Right cardiac atrium (tissue), 5 donors: ENCODE measurements at regions of chr1 and their contacts with region 1.

Region 1: DNA sequence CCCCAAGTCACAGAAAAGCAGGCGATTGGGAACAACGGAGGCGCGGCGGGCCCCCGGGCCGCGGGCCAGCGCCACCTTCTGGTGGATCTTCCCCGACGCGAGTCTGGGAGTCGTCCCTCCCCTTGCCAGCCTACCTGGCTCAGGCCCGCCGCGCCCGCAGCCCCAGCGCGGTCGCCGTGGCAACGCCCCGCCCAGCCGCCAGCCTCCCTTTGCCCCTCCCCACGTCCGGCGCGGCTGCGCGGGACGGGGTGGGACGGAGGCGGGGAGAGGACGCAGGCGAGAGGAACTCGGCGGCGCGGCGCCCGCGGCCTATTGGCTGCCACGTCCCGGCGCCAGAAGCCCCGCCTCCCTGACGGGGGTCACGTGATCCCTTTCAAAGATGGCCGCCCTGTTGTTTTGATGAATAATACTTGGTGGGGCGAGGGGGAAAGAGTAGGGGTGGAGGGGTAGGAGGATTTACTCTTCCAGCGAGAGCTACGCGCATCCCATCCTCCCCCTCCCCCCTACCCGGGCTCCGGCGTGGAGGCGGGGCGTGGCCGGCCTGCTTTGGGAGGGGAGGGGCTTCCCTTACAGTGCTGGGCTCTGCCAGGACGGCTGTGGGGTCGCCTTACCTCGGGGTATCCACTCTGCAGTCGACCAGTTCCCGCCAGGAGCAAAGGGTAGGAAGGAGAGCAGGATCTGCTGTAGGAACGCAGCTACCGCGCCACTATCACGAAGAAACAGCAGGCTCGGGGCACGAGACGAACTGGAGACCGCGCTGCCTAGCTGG is at the start of gene UBE4B:
- DNase-seq: peak; percentile 98 to 100 (median 99)
- ATAC-seq: peak; percentile 100
- H3K4me3 ChIP-seq: peak within 1 kb of the TSS; percentile 80
- H3K27ac ChIP-seq: peak within 1 kb of the TSS; percentile 83
- H3K4me1 ChIP-seq: no peaks in the 10 kb centered on the region
- H3K27me3 ChIP-seq: no peaks in the 10 kb centered on the region
- total RNA-seq, gene UBE4B: 53.8 to 90.5 (median 65.3) TPM

Region 2: DNA sequence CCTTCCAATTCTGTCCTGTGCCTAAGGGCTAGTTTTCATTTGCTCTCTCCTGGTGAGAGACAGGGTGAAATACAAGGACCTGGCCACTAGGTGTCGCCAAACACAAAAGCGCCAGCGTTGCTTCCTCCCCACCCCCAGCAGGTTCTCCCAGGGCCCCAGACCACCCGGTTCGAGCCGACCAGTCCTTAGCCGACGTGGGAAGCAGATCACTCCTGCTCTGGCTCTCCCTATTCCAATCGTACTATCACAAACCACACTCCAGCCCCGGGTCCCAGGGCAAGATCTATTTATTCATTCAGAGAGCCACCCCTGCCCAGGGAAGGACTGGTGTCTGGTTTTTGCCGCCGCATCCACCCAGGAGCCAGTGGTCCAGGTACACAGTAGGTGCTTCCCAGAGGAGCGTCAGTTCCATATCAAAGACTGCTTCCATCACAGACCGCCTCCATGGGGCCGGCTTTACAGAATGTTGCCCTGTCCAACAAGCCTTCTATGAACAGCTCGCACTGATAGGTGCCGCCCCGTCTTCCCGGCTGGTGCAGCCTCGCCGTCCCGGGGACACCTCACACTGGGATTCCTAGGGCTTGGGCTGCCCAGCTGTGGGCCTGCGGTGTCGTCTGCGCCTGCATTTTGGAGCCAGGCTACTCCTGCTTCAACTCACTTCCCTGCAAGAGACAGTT is 157.7 kb before region 1 on chr1:
- intact Hi-C with region 1: loop called in 1 of 4 experiments (anchors 5 kb)
- DNase-seq: peak; percentile 68 to 86 (median 80)
- ATAC-seq: peak; percentile 78 to 83
- H3K4me3 ChIP-seq: no peak overlapping the region
- H3K27ac ChIP-seq: peak overlapping the region; percentile 13
- H3K4me1 ChIP-seq: peaks cover 11% of the 10 kb centered on the region
- H3K27me3 ChIP-seq: no peaks in the 10 kb centered on the region

Region 3: GRCh38 chr1:9900142-9901043 is 132.4 kb before region 1 on chr1:
- intact Hi-C with region 1: no loop called
- DNase-seq: peak; percentile 65 to 85 (median 85)
- ATAC-seq: peak; percentile 93 to 94
- H3K4me3 ChIP-seq: peak overlapping the region; percentile 28
- H3K27ac ChIP-seq: peak overlapping the region; percentile 99
- H3K4me1 ChIP-seq: peaks cover 23% of the 10 kb centered on the region
- H3K27me3 ChIP-seq: no peaks in the 10 kb centered on the region

Region 4: DNA sequence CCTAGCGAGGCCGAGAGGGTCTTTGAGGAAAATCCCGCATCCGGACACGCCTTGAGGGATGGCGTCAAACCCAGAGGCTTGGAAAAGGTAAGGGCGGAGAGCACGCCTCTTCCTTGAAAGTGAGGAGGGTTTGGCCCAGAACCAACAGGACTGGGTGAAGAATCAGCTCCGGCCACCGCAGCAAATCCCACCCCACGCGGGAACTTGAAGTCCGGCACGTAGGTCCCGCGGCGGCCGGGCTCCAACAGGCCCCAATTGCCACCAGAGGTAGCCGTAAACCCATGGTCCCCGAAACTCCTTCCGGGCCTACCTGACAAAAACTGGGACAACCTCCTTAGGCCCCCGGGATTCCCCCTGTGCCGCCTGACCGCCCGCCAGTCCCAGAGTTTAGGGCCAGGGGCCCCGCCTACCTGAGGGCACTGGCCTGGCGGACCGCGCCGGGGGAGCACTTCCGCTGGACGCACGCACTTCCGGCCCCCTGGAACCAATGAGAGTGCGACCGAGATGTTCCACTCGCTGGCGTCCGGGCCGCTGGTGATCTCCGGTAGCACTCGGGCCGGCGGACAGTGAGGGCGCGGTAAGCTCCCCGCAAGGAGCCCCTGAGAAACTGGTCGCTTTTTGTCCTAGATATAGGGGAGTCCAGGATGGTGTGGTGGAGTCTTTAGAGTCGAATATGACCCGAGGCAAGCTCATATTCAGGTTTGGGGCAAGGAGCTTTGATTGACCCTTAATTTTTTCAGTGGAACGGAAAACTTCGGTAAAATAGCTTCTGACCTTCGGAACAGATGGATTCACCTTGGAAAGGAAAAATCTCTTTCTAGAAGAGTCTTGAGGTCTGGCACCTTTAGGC is 89.6 kb before region 1 on chr1 and contains the starts of genes LZIC and NMNAT1:
- intact Hi-C with region 1: loop called in 1 of 4 experiments (anchors 10 kb)
- DNase-seq: peak; percentile 94 to 97 (median 97)
- ATAC-seq: peak; percentile 99
- H3K4me3 ChIP-seq: peak within 1 kb of the TSS; percentile 78
- H3K27ac ChIP-seq: peak within 1 kb of the TSS; percentile 70
- H3K4me1 ChIP-seq: no peaks in the 10 kb centered on the region
- H3K27me3 ChIP-seq: no peaks in the 10 kb centered on the region
- total RNA-seq, gene LZIC: 30.5 to 36.9 (median 33.8) TPM
- total RNA-seq, gene NMNAT1: 15.5 to 19.1 (median 18.1) TPM

Region 5: DNA sequence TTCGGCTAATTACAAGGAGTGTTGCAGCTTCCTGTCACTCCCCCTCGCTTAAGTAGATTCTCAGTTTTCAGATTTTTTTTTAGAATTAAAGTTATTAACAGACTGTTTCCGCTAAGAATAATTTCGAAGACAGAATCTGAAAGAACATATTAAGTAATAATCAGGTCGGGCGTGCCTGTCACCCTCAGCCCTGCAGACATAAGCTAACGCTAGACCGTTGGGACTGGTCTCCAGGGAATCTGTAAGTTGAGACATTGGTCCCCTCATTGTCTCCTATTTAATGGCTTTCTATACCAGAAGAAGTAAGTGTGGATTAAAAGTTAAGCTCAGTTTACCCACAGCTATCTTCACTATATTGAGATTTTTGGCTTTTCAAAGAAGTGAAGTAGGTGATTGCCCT is 75.0 kb before region 1 on chr1:
- intact Hi-C with region 1: loop called in 2 of 4 experiments (anchors 5 kb)
- DNase-seq: no peak
- ATAC-seq: no peak
- H3K4me3 ChIP-seq: no peak overlapping the region
- H3K27ac ChIP-seq: no peak overlapping the region
- H3K4me1 ChIP-seq: no peaks in the 10 kb centered on the region
- H3K27me3 ChIP-seq: no peaks in the 10 kb centered on the region

Region 6: DNA sequence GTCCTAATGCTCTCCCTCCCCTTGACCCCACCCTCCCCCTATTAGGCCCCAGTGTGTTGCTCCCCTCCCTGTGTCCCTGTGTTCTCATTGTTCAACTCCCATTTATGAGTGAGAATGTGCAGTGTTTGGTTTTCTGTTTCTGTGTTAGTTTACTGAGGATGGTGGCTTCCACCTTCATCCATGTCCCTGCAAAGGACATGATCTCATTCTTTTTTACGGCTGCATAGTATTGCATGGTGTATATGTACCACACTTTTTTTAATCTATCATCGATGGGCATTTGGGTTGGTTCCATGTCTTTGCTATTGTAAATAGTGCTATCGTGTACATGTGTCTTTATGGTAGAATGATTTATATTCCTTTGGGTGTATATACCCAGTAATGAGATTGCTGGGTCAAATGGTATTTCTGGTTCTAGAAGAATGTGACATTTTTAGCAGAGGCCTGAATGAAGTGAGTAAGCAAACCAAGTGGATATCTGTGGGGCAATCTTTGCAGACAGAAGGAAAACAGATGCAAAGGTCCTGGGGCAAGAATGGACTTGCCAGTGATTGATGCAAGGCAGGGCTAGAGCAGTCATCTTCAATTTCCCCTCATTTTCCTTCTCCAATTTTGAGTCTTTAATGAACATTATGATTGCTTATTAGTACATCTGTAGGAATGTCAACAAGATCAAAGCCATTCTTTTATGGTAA is 50.2 kb after region 1 on chr1:
- intact Hi-C with region 1: no loop called
- DNase-seq: no peak
- ATAC-seq: no peak
- H3K4me3 ChIP-seq: no peak overlapping the region
- H3K27ac ChIP-seq: no peak overlapping the region
- H3K4me1 ChIP-seq: peaks cover 4% of the 10 kb centered on the region
- H3K27me3 ChIP-seq: no peaks in the 10 kb centered on the region

Region 7: GRCh38 chr1:10108134-10108663 is 75.4 kb after region 1 on chr1:
- intact Hi-C with region 1: loop called in 1 of 4 experiments (anchors 10 kb)
- DNase-seq: no peak
- ATAC-seq: peak; percentile 66 to 72
- H3K4me3 ChIP-seq: no peak overlapping the region
- H3K27ac ChIP-seq: peak overlapping the region; percentile 91
- H3K4me1 ChIP-seq: no peaks in the 10 kb centered on the region
- H3K27me3 ChIP-seq: no peaks in the 10 kb centered on the region

Region 8: DNA sequence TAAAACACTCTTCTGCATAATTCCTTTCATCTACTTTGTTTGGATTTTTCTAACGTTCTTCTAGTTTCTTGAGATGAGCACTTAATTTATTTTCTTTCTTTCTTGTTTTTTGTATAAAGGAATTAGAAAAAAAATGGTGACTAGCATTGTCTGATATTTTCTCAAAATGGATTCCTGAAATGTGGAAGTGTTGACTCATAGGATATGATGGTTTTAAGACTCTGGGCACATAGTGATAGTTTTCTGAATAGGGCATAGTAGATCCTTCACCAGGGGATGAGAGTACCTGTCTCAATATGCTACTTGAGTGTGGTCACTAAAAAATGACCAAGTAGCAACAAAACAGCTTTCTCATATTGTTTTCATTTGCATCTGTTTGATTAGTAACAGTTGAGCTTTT is 542.8 kb after region 1 on chr1:
- intact Hi-C with region 1: no loop called
- DNase-seq: no peak
- ATAC-seq: no peak
- H3K4me3 ChIP-seq: no peak overlapping the region
- H3K27ac ChIP-seq: no peak overlapping the region
- H3K4me1 ChIP-seq: no peaks in the 10 kb centered on the region
- H3K27me3 ChIP-seq: no peaks in the 10 kb centered on the region